ENCODE measurements at regions of chr15 and their contacts with region 1.

Region 1: DNA sequence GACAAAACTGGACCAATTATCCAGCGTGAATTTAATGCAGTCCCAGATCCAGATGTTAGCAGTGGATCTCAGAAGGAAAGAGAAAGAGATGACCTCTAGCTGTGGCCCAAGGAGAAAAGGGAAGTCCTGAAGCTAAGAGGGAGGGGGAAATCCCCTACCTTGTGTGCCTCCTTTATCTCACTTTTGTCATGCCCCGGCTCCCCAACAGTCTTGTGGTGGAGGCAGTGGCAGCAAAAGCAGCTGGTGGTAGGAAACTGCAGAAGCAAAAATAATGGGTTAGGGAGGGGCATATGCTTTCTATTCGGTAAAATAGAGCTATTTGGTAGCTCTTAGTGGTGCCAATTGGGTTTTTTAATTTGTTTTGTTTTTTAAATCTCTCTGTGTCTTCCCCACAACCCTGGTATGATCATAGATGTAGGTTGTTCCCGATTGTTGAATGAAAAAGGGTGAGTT is 56.5 kb downstream of the MCTP2 start:
- DNase-seq: peak; percentile 41
- ATAC-seq: peak; percentile 92
- H3K4me3 Mint-ChIP-seq: peak overlapping the region; percentile 80
- H3K27ac Mint-ChIP-seq: peak overlapping the region; percentile 92
- H3K4me1 Mint-ChIP-seq: peaks cover 89% of the 10 kb centered on the region
- H3K27me3 Mint-ChIP-seq: no peaks in the 10 kb centered on the region
- CTCF ChIP-seq: no peak

Region 2: GRCh38 chr15:94272251-94272898 is 15.4 kb before region 1 on chr15:
- CTCF ChIA-PET with region 1: interaction called, 3 read pairs
- POLR2A ChIA-PET with region 1: interaction called, 3 read pairs
- intact Hi-C with region 1: loop called (anchors 2 kb)
- DNase-seq: no peak
- ATAC-seq: peak; percentile 73
- H3K4me3 Mint-ChIP-seq: no peak overlapping the region
- H3K27ac Mint-ChIP-seq: no peak overlapping the region
- H3K4me1 Mint-ChIP-seq: peaks cover 17% of the 10 kb centered on the region
- H3K27me3 Mint-ChIP-seq: no peaks in the 10 kb centered on the region
- CTCF ChIP-seq: no peak

Region 3: DNA sequence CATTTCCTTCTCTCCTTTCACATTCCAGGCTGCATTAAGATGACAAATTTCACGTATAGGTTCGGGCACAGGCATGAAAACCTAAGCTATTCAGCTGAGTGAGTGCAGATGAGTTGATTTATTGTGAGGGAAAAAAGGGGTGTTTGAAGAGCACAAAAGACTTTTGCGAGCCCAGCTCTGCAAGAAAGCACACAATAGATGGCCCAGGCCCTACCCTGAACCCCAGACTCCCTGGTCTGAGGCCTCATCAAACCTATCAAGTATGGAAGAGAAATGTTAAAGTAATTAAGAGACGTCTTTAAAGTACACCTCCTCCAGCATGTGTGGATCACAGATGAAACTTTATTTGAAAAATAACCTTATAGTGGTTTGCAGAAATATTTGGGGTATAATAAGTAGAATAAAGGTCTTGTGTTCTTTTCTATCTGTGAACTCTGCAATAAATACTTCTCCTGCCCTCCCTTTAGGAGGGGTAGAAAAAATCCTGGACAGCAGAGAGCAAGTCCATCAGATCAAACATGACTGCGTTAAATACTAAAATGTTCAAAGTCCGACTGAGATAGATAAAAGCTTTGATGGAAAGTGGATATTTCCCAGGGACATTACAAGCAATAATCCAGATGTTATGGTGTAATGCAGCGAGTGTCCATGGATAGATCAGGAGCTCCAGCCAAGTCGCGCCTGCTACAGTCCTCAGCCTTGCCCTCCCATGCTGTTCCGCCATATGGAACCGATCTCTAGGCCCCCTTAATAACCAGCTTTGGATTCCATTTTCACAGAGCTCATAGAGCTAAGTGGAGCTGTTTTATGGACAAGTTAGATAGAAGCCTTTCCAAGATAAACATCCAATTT is 65.0 kb after region 1 on chr15:
- CTCF ChIA-PET with region 1: no interaction called
- POLR2A ChIA-PET with region 1: no interaction called
- intact Hi-C with region 1: no loop called
- DNase-seq: no peak
- ATAC-seq: no peak
- H3K4me3 Mint-ChIP-seq: no peak overlapping the region
- H3K27ac Mint-ChIP-seq: no peak overlapping the region
- H3K4me1 Mint-ChIP-seq: no peaks in the 10 kb centered on the region
- H3K27me3 Mint-ChIP-seq: no peaks in the 10 kb centered on the region
- CTCF ChIP-seq: no peak